OCI-LY7 (cell line): ENCODE measurements at regions of chr7 and their contacts with region 1.

Region 1: DNA sequence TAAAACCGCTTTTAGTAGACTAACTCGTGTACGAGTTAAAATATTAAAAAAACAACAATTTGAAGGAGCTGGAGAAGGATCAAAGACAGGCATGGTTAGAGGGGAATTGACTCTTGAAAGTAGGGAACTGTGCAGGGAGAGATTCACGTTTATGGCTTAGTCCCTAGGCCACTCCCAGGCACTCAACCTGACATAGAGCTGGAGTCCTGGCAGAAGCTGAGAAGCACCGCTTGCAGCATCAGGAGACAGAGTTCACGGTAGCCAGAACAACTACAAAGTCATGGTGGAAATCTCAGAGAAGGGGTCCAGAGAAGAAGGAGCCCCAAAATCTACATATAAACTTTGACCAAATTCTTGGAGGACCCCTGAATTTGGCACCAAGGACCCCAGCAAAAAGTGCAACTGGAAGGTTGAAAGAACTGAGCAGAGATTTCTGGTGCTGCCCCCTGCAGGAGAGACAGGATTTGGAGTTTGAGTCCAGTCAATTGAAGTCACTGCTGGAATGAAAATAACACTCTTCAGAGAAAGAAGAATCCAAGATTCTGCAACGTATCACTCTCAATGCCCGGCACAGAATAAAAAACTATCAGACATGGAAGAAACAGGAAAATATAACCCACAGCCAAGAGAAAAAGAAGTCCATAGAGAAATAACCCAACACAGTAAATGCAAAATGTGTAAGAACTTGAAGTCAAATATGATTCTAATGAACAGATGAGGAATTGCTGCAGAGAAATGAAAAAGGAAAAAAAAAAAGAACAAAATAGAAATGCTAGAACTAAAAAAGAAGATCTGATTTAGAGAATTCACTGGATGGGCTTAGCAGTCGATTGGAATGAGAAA is 493.3 kb upstream of the PODXL start:
- DNase-seq: peak; percentile 28
- H3K4me3 ChIP-seq: no peak overlapping the region
- H3K27ac ChIP-seq: no peak overlapping the region
- H3K4me1 ChIP-seq: no peaks in the 10 kb centered on the region
- CTCF ChIP-seq: peak; percentile 87

Region 2: GRCh38 chr7:131688738-131689661 is 360.7 kb before region 1 on chr7:
- CTCF ChIA-PET with region 1: no interaction called
- POLR2A ChIA-PET with region 1: no interaction called
- intact Hi-C with region 1: loop called (anchors 5 kb)
- DNase-seq: peak; percentile 48
- H3K4me3 ChIP-seq: no peak overlapping the region
- H3K27ac ChIP-seq: no peak overlapping the region
- H3K4me1 ChIP-seq: no peaks in the 10 kb centered on the region
- CTCF ChIP-seq: peak; percentile 84